ENCODE measurements at regions of chrX and their contacts with region 1.

Region 1: DNA sequence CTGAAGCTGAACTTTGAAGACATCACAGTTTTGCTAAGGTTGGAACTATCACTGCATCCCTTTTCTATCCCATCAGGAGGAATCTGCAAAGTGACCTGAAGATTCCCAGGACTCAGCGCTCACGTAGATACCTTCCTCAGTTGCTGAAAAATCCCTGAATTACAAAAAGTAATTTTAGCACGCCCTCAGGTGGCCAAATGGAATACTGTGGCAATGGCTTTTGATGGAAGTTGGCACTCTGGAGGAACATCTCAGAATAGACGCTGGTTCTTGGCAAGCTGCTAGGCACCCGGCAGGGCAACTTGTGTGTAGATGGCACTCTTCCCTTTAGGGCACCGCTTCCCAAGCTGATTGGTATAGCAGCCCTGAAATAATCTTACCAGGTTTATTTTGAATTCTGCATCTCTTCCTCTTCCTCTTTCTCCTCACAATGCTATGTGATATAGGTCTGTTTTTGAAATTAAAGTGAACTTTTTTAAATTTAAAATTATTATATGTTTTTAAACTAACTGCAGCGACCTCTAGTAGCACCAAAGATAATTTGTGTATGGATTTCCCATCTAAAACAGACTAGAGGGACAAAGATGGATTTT is 16.3 kb upstream of the ESX1 start:
- DNase-seq: peak; percentile 63
- H3K4me3 ChIP-seq: peak overlapping the region; percentile 30
- H3K27ac ChIP-seq: no peak overlapping the region
- H3K4me1 ChIP-seq: no peaks in the 10 kb centered on the region
- H3K27me3 ChIP-seq: peaks cover 8% of the 10 kb centered on the region
- CTCF ChIP-seq: peak; percentile 77

Region 2: GRCh38 chrX:103845165-103845653 is 425.8 kb before region 1 on chrX:
- CTCF ChIA-PET with region 1: no interaction called
- POLR2A ChIA-PET with region 1: no interaction called
- intact Hi-C with region 1: loop called (anchors 5 kb)
- DNase-seq: peak; percentile 64
- H3K4me3 ChIP-seq: no peak overlapping the region
- H3K27ac ChIP-seq: no peak overlapping the region
- H3K4me1 ChIP-seq: no peaks in the 10 kb centered on the region
- H3K27me3 ChIP-seq: no peaks in the 10 kb centered on the region
- CTCF ChIP-seq: peak; percentile 80

Region 3: GRCh38 chrX:104098151-104098808 is 172.7 kb before region 1 on chrX:
- CTCF ChIA-PET with region 1: no interaction called
- POLR2A ChIA-PET with region 1: no interaction called
- intact Hi-C with region 1: loop called (anchors 1 kb)
- DNase-seq: peak; percentile 68
- H3K4me3 ChIP-seq: no peak overlapping the region
- H3K27ac ChIP-seq: no peak overlapping the region
- H3K4me1 ChIP-seq: no peaks in the 10 kb centered on the region
- H3K27me3 ChIP-seq: peaks cover 34% of the 10 kb centered on the region
- CTCF ChIP-seq: peak; percentile 71

Region 4: GRCh38 chrX:104195489-104196084 is 75.4 kb before region 1 on chrX:
- CTCF ChIA-PET with region 1: interaction called, 6 read pairs
- POLR2A ChIA-PET with region 1: no interaction called
- intact Hi-C with region 1: loop called (anchors 2 kb)
- DNase-seq: peak; percentile 28
- H3K4me3 ChIP-seq: no peak overlapping the region
- H3K27ac ChIP-seq: no peak overlapping the region
- H3K4me1 ChIP-seq: no peaks in the 10 kb centered on the region
- H3K27me3 ChIP-seq: no peaks in the 10 kb centered on the region
- CTCF ChIP-seq: peak; percentile 79

Measured in A673 (cell line).